GM12878 (cell line): ENCODE measurements at regions of chr11 and their contacts with region 1.

Region 1: DNA sequence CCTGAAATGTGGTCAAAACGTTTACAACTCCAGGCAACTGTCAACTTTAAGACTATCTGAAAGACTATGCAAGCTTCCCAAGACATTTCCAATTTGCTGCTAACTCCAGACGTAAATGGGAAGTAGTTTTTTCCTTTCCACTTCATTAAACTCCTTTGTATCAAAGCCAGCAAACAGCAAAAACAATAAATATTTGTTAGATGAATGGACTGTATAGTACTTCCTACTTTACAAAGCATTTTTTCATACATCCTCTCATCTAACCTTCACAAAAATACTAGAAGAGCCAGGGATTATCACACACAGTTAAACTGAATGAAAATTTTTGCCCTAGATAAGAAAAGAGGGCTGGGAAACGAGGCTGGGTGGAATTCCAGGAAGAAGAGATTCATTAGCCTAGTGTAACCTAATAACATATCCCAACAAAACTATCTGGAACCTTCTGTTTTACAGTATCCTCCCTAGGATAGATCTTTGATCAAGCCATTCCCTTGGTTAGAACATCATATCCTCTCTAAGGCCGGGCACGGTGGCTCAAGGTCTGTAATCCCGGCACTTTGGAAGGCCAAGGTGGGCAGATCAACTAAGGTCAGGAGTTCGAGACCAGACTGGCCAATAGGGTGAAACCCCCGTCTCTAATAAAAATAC is 10.4 kb downstream of the NUP98 start:
- DNase-seq: no peak
- ATAC-seq: no peak
- H3K4me3 ChIP-seq: no peak overlapping the region
- H3K27ac ChIP-seq: no peak overlapping the region
- H3K4me1 ChIP-seq: peaks cover 12% of the 10 kb centered on the region
- H3K27me3 ChIP-seq: no peaks in the 10 kb centered on the region
- CTCF ChIP-seq: no peak
- EP300 ChIP-seq: no peak
- POLR2A ChIP-seq: no peak
- RAD21 ChIP-seq: no peak

Region 2: GRCh38 chr11:3732671-3733436 is 54.1 kb before region 1 on chr11:
- CTCF ChIA-PET with region 1: no interaction called
- POLR2A ChIA-PET with region 1: no interaction called
- RAD21 ChIA-PET with region 1: no interaction called
- SMC1A ChIA-PET with region 1: no interaction called
- in situ Hi-C with region 1: no loop called
- intact Hi-C with region 1: no loop called
- DNase-seq: no peak
- ATAC-seq: no peak
- H3K4me3 ChIP-seq: no peak overlapping the region
- H3K27ac ChIP-seq: no peak overlapping the region
- H3K4me1 ChIP-seq: no peaks in the 10 kb centered on the region
- H3K27me3 ChIP-seq: no peaks in the 10 kb centered on the region
- CTCF ChIP-seq: no peak
- EP300 ChIP-seq: no peak
- POLR2A ChIP-seq: no peak
- RAD21 ChIP-seq: no peak

Region 3: GRCh38 chr11:3824714-3825472 is 38.0 kb after region 1 on chr11:
- CTCF ChIA-PET with region 1: no interaction called
- POLR2A ChIA-PET with region 1: interaction called, 10 read pairs
- RAD21 ChIA-PET with region 1: no interaction called
- SMC1A ChIA-PET with region 1: interaction called, 5 read pairs
- in situ Hi-C with region 1: no loop called
- intact Hi-C with region 1: no loop called
- DNase-seq: no peak
- ATAC-seq: peak; percentile 97
- H3K4me3 ChIP-seq: no peak overlapping the region
- H3K27ac ChIP-seq: no peak overlapping the region
- H3K4me1 ChIP-seq: peaks cover 2% of the 10 kb centered on the region; the same call in 1 of the 2 replicates
- H3K27me3 ChIP-seq: no peaks in the 10 kb centered on the region
- CTCF ChIP-seq: peak; percentile 83 to 97 (median 96)
- EP300 ChIP-seq: no peak
- POLR2A ChIP-seq: peak; percentile 12; the same call in 1 of the 2 replicates
- RAD21 ChIP-seq: peak; percentile 75